WTC11 (cell line): ENCODE measurements at regions of chr19 and their contacts with region 1.

Region 1: DNA sequence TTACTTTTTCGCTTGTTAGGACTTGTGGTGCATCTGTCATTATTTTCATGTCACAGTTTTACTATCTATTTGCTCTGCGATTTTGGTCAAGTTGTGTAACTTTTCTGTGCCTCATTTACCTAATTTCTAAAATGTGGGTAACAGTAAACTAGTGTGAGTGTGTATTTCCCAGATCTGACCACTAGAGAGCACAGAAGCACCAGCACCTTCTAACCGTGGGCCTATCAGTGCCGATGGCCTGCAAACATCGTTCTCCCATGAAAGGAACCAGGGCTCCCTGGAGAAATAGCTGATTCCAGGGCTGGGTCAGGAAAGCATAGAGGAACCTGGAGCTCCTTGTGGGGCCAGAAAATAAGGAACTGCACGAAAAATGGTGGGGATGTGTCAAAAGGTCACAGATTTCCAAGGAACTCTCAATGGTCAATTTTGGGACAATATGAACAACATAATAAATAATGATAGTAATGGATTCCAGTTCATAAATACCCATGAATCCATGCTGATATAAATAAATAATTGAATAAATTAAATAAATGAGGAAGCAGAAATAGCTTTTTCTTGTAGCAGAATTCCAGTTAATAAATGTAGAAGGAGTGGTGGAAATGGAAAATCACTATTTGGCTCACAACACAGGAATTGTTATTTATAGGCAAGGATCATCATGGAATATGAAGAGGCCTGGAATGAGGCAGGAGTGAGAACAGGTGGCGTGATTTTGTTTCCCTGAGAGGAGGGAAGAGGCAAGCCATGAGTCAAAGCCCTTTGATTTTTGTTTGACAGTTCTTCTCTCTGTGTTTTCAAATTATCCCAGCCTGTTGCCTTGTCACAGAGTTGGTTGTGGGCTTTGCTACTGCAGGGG is 31.1 kb downstream of the CEACAM8 start:
- DNase-seq: peak; percentile 56
- ATAC-seq: peak; percentile 92
- H3K4me3 Mint-ChIP-seq: no peak overlapping the region
- H3K27ac Mint-ChIP-seq: no peak overlapping the region
- H3K4me1 Mint-ChIP-seq: peaks cover 14% of the 10 kb centered on the region
- H3K27me3 Mint-ChIP-seq: peaks cover 24% of the 10 kb centered on the region
- CTCF ChIP-seq: peak; percentile 73

Region 2: GRCh38 chr19:42396381-42397262 is 167.0 kb before region 1 on chr19:
- CTCF ChIA-PET with region 1: no interaction called
- POLR2A ChIA-PET with region 1: no interaction called
- DNase-seq: peak; percentile 100
- ATAC-seq: peak; percentile 94
- H3K4me3 Mint-ChIP-seq: peak overlapping the region; percentile 78
- H3K27ac Mint-ChIP-seq: peak overlapping the region; percentile 86
- H3K4me1 Mint-ChIP-seq: peaks cover 30% of the 10 kb centered on the region
- H3K27me3 Mint-ChIP-seq: peaks cover 30% of the 10 kb centered on the region
- CTCF ChIP-seq: no peak

Region 3: GRCh38 chr19:42450314-42450934 is 113.2 kb before region 1 on chr19:
- CTCF ChIA-PET with region 1: interaction called, 15 read pairs
- POLR2A ChIA-PET with region 1: no interaction called
- DNase-seq: peak; percentile 68
- ATAC-seq: peak; percentile 94
- H3K4me3 Mint-ChIP-seq: no peak overlapping the region
- H3K27ac Mint-ChIP-seq: no peak overlapping the region
- H3K4me1 Mint-ChIP-seq: peaks cover 19% of the 10 kb centered on the region
- H3K27me3 Mint-ChIP-seq: no peaks in the 10 kb centered on the region; the same call in 1 of the 2 replicates
- CTCF ChIP-seq: peak; percentile 82

Region 4: DNA sequence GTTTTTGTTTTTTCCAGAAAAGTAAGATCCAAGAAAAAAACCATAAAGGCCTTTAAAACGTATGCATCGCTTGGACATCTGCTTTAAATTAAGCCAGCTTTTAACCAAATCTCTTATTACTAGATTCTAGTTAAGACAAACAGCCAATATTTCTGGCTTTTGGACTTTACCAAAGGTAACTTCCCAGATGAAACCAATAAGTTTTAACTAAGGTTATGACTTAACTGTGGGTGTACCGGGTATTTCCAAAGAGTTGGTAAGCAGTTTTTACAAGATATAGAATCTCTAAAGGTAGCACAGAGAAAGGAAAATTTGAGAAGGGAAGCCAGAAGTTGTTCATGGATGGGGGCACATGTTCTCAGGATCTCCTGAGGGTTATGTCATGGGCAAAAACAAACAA is 69.3 kb before region 1 on chr19:
- CTCF ChIA-PET with region 1: no interaction called
- POLR2A ChIA-PET with region 1: no interaction called
- DNase-seq: no peak
- ATAC-seq: no peak
- H3K4me3 Mint-ChIP-seq: no peak overlapping the region
- H3K27ac Mint-ChIP-seq: no peak overlapping the region
- H3K4me1 Mint-ChIP-seq: peaks cover 35% of the 10 kb centered on the region
- H3K27me3 Mint-ChIP-seq: peaks cover 7% of the 10 kb centered on the region; the same call in 1 of the 2 replicates
- CTCF ChIP-seq: no peak

Region 5: GRCh38 chr19:42573642-42574041 is 10.1 kb after region 1 on chr19:
- CTCF ChIA-PET with region 1: interaction called, 10 read pairs
- POLR2A ChIA-PET with region 1: interaction called, 3 read pairs
- DNase-seq: no peak
- ATAC-seq: no peak
- H3K4me3 Mint-ChIP-seq: no peak overlapping the region
- H3K27ac Mint-ChIP-seq: no peak overlapping the region
- H3K4me1 Mint-ChIP-seq: peaks cover 10% of the 10 kb centered on the region
- H3K27me3 Mint-ChIP-seq: peaks cover 15% of the 10 kb centered on the region
- CTCF ChIP-seq: no peak